Right lobe of liver (tissue), 6 donors: ENCODE measurements at regions of chr10 and their contacts with region 1.

Region 1: DNA sequence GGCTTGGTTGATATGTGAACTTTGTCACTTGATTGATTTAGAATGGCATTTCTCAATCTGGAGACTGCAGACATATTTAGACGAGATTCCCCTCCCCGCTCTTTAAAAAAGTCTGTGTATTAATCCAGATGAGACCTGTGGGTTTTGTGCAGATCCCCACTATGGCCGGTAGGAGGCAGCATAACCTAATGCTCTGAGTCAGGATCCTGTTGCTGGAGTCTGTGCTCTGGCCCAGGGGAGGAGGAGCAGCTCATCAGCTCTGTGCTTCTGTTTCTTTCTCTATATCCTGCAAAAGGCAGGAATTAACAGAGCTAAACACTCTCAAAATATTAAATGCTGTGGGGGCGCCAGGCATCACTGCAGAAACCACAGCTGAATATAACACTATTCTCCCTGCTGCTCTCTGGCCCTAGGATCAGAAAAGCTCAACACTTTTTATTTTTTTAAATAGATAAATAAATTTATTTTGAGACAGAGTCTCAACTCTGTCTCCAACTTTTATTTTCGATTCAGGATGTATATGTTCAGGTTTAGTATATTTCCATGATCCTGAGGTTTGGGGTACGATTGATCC is 23.9 kb upstream of the SEPHS1 start:
- DNase-seq: peak; percentile 54 to 81 (median 68)
- ATAC-seq: peak; percentile 100
- H3K4me3 ChIP-seq: no peak overlapping the region
- H3K27ac ChIP-seq: no peak overlapping the region
- H3K4me1 ChIP-seq: no peaks in the 10 kb centered on the region
- H3K27me3 ChIP-seq: no peaks in the 10 kb centered on the region
- CTCF ChIP-seq: peak; percentile 87 to 97 (median 91)
- POLR2A ChIP-seq: no peak

Region 2: GRCh38 chr10:13117841-13118783 is 253.9 kb before region 1 on chr10:
- intact Hi-C with region 1: no loop called
- DNase-seq: no peak
- ATAC-seq: no peak
- H3K4me3 ChIP-seq: no peak overlapping the region
- H3K27ac ChIP-seq: no peak overlapping the region
- H3K4me1 ChIP-seq: peaks cover 0 to 7% (median 5%) of the 10 kb centered on the region in 4 donors
- H3K27me3 ChIP-seq: no peaks in the 10 kb centered on the region
- CTCF ChIP-seq: no peak
- POLR2A ChIP-seq: no peak

Region 3: GRCh38 chr10:13439313-13440184 is 67.6 kb after region 1 on chr10:
- intact Hi-C with region 1: loop called in 1 of 2 experiments (anchors 10 kb)
- DNase-seq: peak in 1 of 3 donors; percentile 30
- ATAC-seq: peak; percentile 13 to 57 (median 30)
- H3K4me3 ChIP-seq: peak overlapping the region in 1 of 3 donors; percentile 42
- H3K27ac ChIP-seq: no peak overlapping the region
- H3K4me1 ChIP-seq: peaks cover 0 to 8% (median 4%) of the 10 kb centered on the region in 4 donors
- H3K27me3 ChIP-seq: no peaks in the 10 kb centered on the region
- CTCF ChIP-seq: no peak
- POLR2A ChIP-seq: no peak

Region 4: DNA sequence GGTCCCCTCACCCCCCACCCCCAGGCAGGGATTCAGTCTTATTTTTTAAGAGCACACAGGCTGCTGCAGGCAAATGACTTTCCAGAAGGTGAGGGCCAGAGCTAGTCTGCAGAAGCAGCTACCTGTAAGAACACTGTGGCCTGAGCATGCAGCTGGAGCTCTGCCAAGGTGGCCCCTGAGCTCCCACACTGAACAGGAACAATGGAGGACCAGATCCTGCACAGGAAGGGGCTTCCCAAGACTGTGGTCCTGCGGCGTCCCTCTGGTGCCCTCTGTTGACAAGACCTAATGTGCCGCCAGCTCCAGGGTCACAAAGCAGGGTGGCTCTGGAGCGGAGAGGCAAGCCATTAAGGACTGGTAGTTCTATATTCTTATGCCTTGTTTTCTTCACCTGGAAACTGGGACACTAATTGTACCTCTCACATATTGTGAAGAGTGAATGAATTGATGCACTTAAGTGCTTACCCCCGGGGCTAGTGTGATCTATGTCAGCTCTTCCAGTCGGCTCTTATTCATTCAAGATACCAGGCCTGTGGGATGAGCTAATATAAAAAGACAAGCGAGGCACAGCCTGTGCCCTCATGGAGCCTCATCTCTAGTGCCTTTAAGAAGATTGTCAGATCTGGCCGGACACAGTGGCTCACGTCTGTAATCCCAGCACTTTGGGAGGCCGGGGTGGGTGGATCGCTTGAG is 164.8 kb after region 1 on chr10:
- intact Hi-C with region 1: loop called in 1 of 2 experiments (anchors 10 kb)
- DNase-seq: peak; percentile 60 to 70 (median 60)
- ATAC-seq: peak; percentile 89 to 97 (median 92)
- H3K4me3 ChIP-seq: no peak overlapping the region
- H3K27ac ChIP-seq: no peak overlapping the region
- H3K4me1 ChIP-seq: no peaks in the 10 kb centered on the region
- H3K27me3 ChIP-seq: no peaks in the 10 kb centered on the region
- CTCF ChIP-seq: peak; percentile 41 to 71 (median 68)
- POLR2A ChIP-seq: no peak

Region 5: GRCh38 chr10:13608246-13608853 is 236.4 kb after region 1 on chr10:
- intact Hi-C with region 1: no loop called
- DNase-seq: no peak
- ATAC-seq: peak in 1 of 4 donors; percentile 28
- H3K4me3 ChIP-seq: no peak overlapping the region
- H3K27ac ChIP-seq: no peak overlapping the region
- H3K4me1 ChIP-seq: no peaks in the 10 kb centered on the region
- H3K27me3 ChIP-seq: no peaks in the 10 kb centered on the region
- CTCF ChIP-seq: no peak
- POLR2A ChIP-seq: no peak

Region 6: DNA sequence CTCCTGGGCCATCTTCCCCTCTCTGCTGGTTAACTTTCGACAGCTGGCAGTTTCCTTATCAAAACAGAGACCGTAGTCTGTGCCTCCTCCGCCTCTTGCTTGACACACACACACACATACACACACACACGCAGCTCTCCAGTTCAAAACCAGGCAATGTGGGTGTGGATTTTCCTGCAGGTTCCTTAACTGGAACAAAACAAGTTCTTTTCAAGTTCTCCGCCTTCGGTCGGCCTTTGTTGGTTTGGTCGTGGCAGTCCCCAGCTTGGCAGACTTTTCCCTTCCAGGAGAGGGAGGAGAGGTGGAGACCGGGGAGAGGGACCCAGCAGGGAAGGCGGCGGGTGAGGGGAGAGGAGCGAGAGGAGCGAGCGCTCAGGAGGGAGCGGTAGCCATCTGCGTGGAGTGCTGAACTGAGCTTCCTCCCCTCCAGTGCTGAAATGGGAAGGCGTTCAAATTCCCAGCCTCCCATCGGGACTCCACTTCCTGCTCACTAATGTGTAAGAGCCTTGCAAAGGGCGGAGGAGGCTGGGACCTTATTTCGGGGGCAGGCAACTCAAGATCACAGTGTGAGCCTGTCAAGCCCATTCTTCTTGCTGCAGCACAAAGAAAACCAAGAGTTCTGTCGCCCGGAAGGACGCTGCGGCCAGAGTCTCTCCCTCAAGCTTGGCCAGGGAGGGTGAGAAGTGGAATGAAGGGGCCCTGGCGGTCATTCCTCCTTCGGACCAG is 335.3 kb after region 1 on chr10:
- intact Hi-C with region 1: no loop called
- DNase-seq: peak; percentile 71 to 82 (median 79)
- ATAC-seq: peak; percentile 84 to 90 (median 85)
- H3K4me3 ChIP-seq: peak overlapping the region; percentile 63 to 67 (median 67)
- H3K27ac ChIP-seq: peak overlapping the region; percentile 39 to 65 (median 47)
- H3K4me1 ChIP-seq: peaks cover 0 to 17% (median 5%) of the 10 kb centered on the region in 4 donors
- H3K27me3 ChIP-seq: no peaks in the 10 kb centered on the region
- CTCF ChIP-seq: no peak
- POLR2A ChIP-seq: peak; percentile 50

Region 7: DNA sequence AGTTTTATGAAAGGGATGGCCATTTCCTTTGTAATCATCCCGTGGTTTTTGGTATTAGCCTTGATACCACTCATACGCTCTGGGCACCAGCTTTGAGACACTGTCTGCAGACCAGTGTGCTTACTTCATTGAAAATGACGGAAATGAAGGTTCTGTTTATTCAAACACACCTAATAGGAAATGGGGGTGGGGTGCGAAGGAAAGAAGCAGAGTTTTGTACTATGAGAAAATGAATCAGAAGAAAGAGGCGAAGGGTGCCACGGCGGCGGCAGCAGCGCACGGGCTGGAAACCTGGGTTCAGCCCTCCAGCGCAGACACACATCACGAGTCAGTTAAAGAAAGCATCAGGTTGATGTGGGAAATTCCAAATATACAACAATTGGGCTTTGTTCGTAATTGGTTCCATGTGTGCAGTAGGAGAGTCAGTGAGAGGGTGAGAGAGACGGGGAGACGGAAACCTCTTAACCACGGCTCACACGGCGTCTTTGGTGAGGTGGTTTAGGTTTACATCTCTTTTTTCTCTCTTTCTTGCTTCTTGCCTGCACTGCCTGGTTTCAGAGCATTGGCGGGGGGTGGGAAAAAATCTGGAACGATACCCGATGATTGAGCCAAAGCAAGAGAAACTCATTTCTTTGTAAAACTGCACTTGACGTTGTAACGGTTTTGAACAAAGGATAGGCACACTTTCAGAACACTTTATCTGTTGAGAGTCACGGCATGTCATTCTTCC is 637.6 kb after region 1 on chr10:
- intact Hi-C with region 1: no loop called
- DNase-seq: no peak
- ATAC-seq: peak in 3 of 4 donors; percentile 9 to 22 (median 18)
- H3K4me3 ChIP-seq: no peak overlapping the region
- H3K27ac ChIP-seq: peak overlapping the region in 1 of 3 donors; percentile 6
- H3K4me1 ChIP-seq: no peaks in the 10 kb centered on the region
- H3K27me3 ChIP-seq: no peaks in the 10 kb centered on the region
- CTCF ChIP-seq: no peak
- POLR2A ChIP-seq: no peak